Activated CD4-positive, alpha-beta memory T cell treated with anti-CD3 and anti-CD28 coated beads for 36 hours (primary cell): ENCODE measurements at regions of chr4 and their contacts with region 1.

Region 1: DNA sequence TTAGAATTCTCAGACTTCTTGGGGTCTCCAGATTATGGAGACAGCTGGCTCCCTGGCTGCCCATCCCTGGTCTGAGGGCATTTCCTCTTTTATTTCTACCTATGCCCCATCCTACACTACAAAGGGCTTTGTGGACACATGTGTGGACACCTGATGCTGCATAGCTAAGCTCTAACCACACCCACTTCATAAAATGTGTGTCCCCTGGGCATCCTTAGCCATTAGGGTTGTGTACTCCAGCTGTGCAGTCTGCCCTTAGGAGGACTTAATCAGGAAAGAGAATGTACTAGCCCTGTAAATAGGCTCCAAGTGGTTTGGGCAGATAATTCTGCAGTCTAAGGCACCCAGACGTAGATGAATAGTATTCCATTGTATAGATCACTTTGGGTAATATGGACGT is 47.0 kb downstream of the COQ2 start:
- DNase-seq: no peak
- H3K4me3 Mint-ChIP-seq: no peak overlapping the region
- H3K27ac Mint-ChIP-seq: no peak overlapping the region
- H3K4me1 Mint-ChIP-seq: peaks cover 36% of the 10 kb centered on the region
- H3K27me3 Mint-ChIP-seq: peaks cover 41% of the 10 kb centered on the region

Region 2: GRCh38 chr4:83252782-83253405 is 15.3 kb after region 1 on chr4:
- CTCF ChIA-PET with region 1: interaction called, 19 read pairs
- POLR2A ChIA-PET with region 1: interaction called, 5 read pairs
- intact Hi-C with region 1: loop called (anchors 2 kb)
- DNase-seq: peak; percentile 78
- H3K4me3 Mint-ChIP-seq: no peak overlapping the region
- H3K27ac Mint-ChIP-seq: no peak overlapping the region
- H3K4me1 Mint-ChIP-seq: peaks cover 9% of the 10 kb centered on the region
- H3K27me3 Mint-ChIP-seq: no peaks in the 10 kb centered on the region

Region 3: GRCh38 chr4:83276299-83277040 is 38.9 kb after region 1 on chr4:
- CTCF ChIA-PET with region 1: interaction called, 19 read pairs
- POLR2A ChIA-PET with region 1: no interaction called
- intact Hi-C with region 1: loop called (anchors 2 kb)
- DNase-seq: no peak
- H3K4me3 Mint-ChIP-seq: no peak overlapping the region
- H3K27ac Mint-ChIP-seq: peak overlapping the region; percentile 35
- H3K4me1 Mint-ChIP-seq: peaks cover 33% of the 10 kb centered on the region
- H3K27me3 Mint-ChIP-seq: no peaks in the 10 kb centered on the region